CD14-positive monocyte (primary cell): ENCODE measurements at regions of chr9 and their contacts with region 1.

Region 1: GRCh38 chr9:18255158-18255629 is 218.8 kb upstream of the ADAMTSL1 start:
- DNase-seq: peak; percentile 23 to 57 (median 51)
- H3K4me3 ChIP-seq: no peak overlapping the region
- H3K4me3 Mint-ChIP-seq: no peak overlapping the region
- H3K27ac ChIP-seq: no peak overlapping the region
- H3K27ac Mint-ChIP-seq: no peak overlapping the region
- H3K4me1 ChIP-seq: no peaks in the 10 kb centered on the region
- H3K4me1 Mint-ChIP-seq: no peaks in the 10 kb centered on the region
- H3K27me3 ChIP-seq: peaks cover 0 to 2% of the 10 kb centered on the region in 2 donors
- H3K27me3 Mint-ChIP-seq: peaks cover 1 to 2% (median 2%) of the 10 kb centered on the region in 3 donors
- CTCF ChIP-seq: peak; percentile 96

Region 2: DNA sequence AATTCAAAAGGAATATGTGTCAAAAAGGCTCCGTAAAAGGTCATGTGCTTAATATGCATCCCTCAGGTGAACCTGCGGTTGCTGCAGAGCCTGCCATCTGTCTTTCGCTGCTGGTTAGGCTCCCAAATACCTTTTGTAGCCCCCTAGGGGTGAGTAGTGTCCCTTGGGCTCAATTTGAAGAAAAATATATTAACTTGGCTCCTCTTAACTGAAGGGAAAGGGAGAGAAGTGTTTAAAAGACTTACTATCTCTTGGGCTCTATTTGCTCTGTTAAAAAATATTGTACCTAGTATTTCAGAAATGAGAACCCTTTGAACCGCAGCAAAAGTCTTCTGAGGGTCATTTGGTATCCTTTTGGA is 42.3 kb after region 1 on chr9:
- intact Hi-C with region 1: no loop called
- DNase-seq: no peak
- H3K4me3 ChIP-seq: no peak overlapping the region
- H3K4me3 Mint-ChIP-seq: no peak overlapping the region
- H3K27ac ChIP-seq: no peak overlapping the region
- H3K27ac Mint-ChIP-seq: no peak overlapping the region
- H3K4me1 ChIP-seq: no peaks in the 10 kb centered on the region
- H3K4me1 Mint-ChIP-seq: no peaks in the 10 kb centered on the region
- H3K27me3 ChIP-seq: no peaks in the 10 kb centered on the region
- H3K27me3 Mint-ChIP-seq: peaks cover 0 to 2% (median 2%) of the 10 kb centered on the region in 3 donors
- CTCF ChIP-seq: no peak

Region 3: GRCh38 chr9:18331808-18332209 is 76.6 kb after region 1 on chr9:
- intact Hi-C with region 1: no loop called
- DNase-seq: no peak
- H3K4me3 ChIP-seq: no peak overlapping the region
- H3K4me3 Mint-ChIP-seq: no peak overlapping the region
- H3K27ac ChIP-seq: no peak overlapping the region
- H3K27ac Mint-ChIP-seq: no peak overlapping the region
- H3K4me1 ChIP-seq: no peaks in the 10 kb centered on the region
- H3K4me1 Mint-ChIP-seq: no peaks in the 10 kb centered on the region
- H3K27me3 ChIP-seq: no peaks in the 10 kb centered on the region
- H3K27me3 Mint-ChIP-seq: peaks cover 0 to 1% (median 0%) of the 10 kb centered on the region in 3 donors
- CTCF ChIP-seq: no peak

Region 4: DNA sequence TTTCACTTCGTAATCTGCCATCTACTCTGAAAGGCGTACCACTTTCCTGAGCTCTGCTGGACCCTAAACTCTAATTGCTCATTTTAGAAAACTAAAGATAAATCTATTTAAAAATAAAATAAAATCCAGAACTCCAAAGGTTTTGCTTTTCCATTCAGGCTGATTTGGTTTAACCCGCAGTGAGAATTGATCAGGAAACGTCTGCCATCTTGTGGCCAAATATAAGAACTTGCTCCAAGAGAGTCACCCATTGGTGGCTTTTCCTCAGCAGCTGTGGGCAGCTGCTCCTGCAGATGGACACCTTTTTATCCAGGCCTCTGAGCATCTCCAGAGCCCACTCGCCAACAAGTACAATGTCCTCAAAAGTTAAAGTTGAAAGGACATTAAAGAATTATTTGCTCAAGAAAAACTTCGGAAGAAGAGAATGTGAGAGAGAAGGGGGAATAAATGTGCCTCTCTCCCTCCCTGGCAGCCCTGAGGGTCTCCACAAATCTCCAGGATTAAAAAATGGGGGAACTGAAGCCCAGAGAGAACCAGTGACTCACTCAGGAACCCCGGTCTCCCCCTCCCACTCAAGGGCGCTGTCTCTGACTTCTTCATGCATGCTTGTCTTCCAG is 773.7 kb after region 1 on chr9:
- intact Hi-C with region 1: loop called in 1 of 2 experiments (anchors 10 kb)
- DNase-seq: peak in 2 of 3 donors; percentile 27 to 36
- H3K4me3 ChIP-seq: no peak overlapping the region
- H3K4me3 Mint-ChIP-seq: no peak overlapping the region
- H3K27ac ChIP-seq: no peak overlapping the region
- H3K27ac Mint-ChIP-seq: no peak overlapping the region
- H3K4me1 ChIP-seq: no peaks in the 10 kb centered on the region
- H3K4me1 Mint-ChIP-seq: no peaks in the 10 kb centered on the region
- H3K27me3 ChIP-seq: no peaks in the 10 kb centered on the region
- H3K27me3 Mint-ChIP-seq: peaks cover 1 to 3% (median 2%) of the 10 kb centered on the region in 3 donors
- CTCF ChIP-seq: peak; percentile 71

Region 5: GRCh38 chr9:19456996-19457692 is 1202.0 kb after region 1 on chr9:
- intact Hi-C with region 1: loop called (anchors 5 to 10 kb)
- DNase-seq: peak; percentile 47 to 72 (median 63)
- H3K4me3 ChIP-seq: peak overlapping the region in 2 of 3 experiments; percentile 10 to 37
- H3K4me3 Mint-ChIP-seq: peak overlapping the region; percentile 13 to 84
- H3K27ac ChIP-seq: no peak overlapping the region
- H3K27ac Mint-ChIP-seq: no peak overlapping the region
- H3K4me1 ChIP-seq: peaks cover 5 to 8% of the 10 kb centered on the region in 2 donors
- H3K4me1 Mint-ChIP-seq: peaks cover 10% of the 10 kb centered on the region
- H3K27me3 ChIP-seq: no peaks in the 10 kb centered on the region
- H3K27me3 Mint-ChIP-seq: peaks cover 0 to 6% (median 0%) of the 10 kb centered on the region in 3 donors
- CTCF ChIP-seq: peak; percentile 98